Gastrocnemius medialis (tissue), 4 donors: ENCODE measurements at regions of chr11 and their contacts with region 1.

Region 1: DNA sequence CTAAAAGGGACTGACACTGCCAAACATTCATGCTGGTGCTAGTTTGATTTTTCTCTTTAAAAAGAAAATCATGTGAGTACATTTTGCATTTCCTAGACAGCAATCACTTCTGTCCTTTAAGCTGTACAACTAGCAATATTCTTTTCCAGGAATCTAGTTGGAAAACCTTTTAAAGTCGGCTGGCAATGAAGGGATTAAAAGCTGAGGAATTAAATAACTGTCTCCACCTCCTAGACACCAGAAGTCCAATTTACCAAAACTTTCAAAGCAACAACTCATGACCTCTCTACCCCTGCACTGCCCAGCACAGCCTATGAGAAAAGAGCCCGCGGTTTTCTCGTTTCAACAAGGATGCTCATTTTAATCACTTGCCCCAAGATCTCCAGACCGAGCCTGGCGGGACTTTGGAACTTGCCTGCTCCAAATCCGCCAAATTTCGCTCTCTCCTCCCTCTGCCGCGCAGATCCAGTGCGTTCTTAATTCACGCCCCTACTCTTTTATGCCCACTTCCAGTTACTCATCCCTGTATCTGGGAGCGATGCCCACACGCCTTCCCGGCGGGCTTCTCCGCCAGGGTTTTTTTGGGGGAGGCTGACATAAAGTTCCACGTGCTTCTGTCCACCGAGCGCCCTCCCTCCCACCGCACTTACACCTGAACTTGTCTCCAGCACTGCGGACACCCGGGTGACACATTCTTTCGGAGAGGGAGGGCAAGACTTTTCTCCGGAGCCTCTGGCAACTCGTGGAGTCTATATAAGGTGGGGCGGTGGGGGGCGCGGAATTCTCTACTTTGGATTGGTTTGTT is 2.5 kb downstream of the MPPED2 start:
- DNase-seq: no peak
- ATAC-seq: no peak
- H3K4me3 ChIP-seq: peak overlapping the region; percentile 72 to 88 (median 82)
- H3K27ac ChIP-seq: peak overlapping the region in 1 of 4 donors; percentile 72
- H3K4me1 ChIP-seq: no peaks in the 10 kb centered on the region
- H3K27me3 ChIP-seq: no peaks in the 10 kb centered on the region
- CTCF ChIP-seq: no peak
- POLR2A ChIP-seq: no peak

Region 2: DNA sequence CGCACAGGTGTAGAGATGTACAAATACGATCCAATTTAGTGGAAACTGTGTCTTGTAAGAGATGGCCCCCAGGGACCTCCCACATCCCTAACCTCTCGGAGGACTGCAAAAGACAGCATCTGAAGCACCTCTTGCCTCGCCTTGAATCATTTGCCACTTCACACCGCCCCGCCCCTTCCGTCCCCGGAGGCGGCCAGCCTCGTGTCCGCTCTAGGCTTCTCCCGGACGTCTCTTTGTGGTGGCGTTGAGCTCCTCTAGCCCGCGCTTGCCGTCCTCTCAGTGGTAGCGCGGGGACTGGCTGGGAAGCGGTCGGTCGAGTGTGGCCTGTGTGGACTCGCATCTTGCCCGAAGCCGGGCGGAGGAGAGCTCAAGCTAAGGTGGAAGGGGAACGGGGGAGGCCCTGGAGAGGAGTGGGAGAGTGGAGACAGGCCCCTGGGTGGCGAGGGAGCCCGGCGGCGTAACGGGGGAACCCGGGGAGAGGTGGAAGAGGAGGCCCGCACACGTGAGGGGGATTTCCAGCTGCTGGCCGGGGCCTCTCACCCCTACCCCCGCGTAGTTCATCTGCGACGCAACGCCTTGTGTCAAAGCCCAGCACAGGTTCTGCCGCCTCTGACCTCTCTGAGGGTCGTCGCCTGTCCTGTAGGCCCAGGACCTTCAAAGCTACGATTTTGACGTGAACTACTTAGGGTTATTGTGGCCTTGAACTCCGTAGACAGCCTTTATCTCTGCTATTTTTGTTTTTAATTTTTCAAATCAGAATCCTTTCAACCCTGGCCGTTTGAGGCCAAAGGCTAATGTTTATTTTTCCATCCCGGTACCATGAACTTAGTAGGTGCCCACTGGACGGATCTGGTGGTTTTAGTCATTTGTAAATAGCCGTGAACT is 260.6 kb before region 1 on chr11 and contains the start of gene ARL14EP:
- in situ Hi-C with region 1: no loop called
- intact Hi-C with region 1: loop called (anchors 5 kb)
- DNase-seq: peak; percentile 82 to 90
- ATAC-seq: peak; percentile 97 to 99
- H3K4me3 ChIP-seq: peak within 1 kb of the TSS; percentile 75 to 86 (median 80)
- H3K27ac ChIP-seq: peak within 1 kb of the TSS; percentile 88 to 91 (median 90)
- H3K4me1 ChIP-seq: peaks cover 28% of the 10 kb centered on the region in 2 donors
- H3K27me3 ChIP-seq: no peaks in the 10 kb centered on the region
- CTCF ChIP-seq: no peak
- POLR2A ChIP-seq: peak; percentile 79 to 82
- total RNA-seq, gene ARL14EP: 10.3 to 26.1 (median 14.1) TPM